ENCODE measurements at regions of chr4 and their contacts with region 1.

Region 1: GRCh38 chr4:13476915-13477314 is 7.2 kb downstream of the RAB28 start:
- DNase-seq: no peak
- ATAC-seq: no peak; the same call in 1 of the 2 replicates
- H3K4me3 ChIP-seq: no peak overlapping the region
- H3K27ac ChIP-seq: no peak overlapping the region
- H3K4me1 ChIP-seq: peaks cover 7% of the 10 kb centered on the region; the same call in 1 of the 2 replicates
- H3K27me3 ChIP-seq: no peaks in the 10 kb centered on the region
- CTCF ChIP-seq: no peak

Region 2: GRCh38 chr4:13944095-13944511 is 467.2 kb after region 1 on chr4:
- CTCF ChIA-PET with region 1: interaction called, 13 read pairs
- POLR2A ChIA-PET with region 1: no interaction called
- in situ Hi-C with region 1: no loop called
- intact Hi-C with region 1: no loop called
- DNase-seq: no peak
- ATAC-seq: no peak
- H3K4me3 ChIP-seq: no peak overlapping the region
- H3K27ac ChIP-seq: no peak overlapping the region
- H3K4me1 ChIP-seq: no peaks in the 10 kb centered on the region
- H3K27me3 ChIP-seq: no peaks in the 10 kb centered on the region
- CTCF ChIP-seq: no peak

Measured in Panc1 (cell line).